Activated CD8-positive, alpha-beta memory T cell treated with anti-CD3 and anti-CD28 coated beads, Interleukin-2, amount 10 ng/mL, durations not matched to agents 7 days and 5 days (primary cell): ENCODE measurements at regions of chr12 and their contacts with region 1.

Region 1: DNA sequence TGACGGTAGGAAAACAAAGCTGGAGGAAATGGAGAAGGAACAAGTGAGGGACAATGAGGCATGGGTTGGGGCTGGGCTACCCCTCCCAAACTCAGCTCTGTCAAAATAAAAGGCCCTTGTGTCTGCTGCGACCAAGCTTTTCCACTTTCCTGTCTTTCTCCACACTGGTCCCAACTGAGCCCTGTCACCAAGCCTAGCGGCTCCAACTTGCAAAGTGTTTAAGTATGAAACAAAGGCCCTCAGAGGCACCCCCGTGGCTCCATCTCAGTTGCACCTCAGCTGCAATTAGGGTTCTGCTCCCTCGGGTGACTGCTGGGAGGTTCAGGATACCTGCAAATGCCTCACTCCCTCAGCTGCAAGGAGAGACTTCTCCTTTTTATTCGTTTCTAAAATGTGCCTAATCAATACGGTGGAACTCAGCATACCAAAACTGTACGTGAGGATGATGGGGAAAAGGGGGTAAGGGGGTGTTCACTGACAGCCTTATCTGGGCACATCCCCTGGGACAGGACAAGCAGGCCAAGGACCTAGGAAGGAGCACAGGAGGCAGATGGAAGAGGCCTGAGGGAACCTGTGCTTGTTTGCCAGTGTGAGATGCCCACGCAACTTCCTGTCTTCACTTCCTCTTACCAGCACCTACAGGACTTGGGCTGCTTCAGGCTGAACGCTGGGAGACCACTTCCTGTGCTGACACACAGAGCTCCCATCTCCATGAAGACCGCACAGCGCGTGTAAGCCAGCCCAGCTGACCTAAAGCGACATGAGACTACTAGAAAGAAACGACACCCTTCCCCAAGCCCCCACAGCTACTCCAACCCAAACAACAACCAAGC is 8.9 kb downstream of the VAMP1 start:
- DNase-seq: peak; percentile 97
- ATAC-seq: peak; percentile 82
- H3K4me3 Mint-ChIP-seq: peak overlapping the region; percentile 72
- H3K27ac Mint-ChIP-seq: peak overlapping the region; percentile 98
- H3K4me1 Mint-ChIP-seq: peaks cover 87% of the 10 kb centered on the region
- H3K27me3 Mint-ChIP-seq: no peaks in the 10 kb centered on the region

Region 2: GRCh38 chr12:6443361-6443983 is 18.1 kb before region 1 on chr12:
- CTCF ChIA-PET with region 1: interaction called, 45 read pairs
- DNase-seq: peak; percentile 67
- ATAC-seq: peak; percentile 50
- H3K4me3 Mint-ChIP-seq: peak overlapping the region; percentile 80
- H3K27ac Mint-ChIP-seq: peak overlapping the region; percentile 87
- H3K4me1 Mint-ChIP-seq: peaks cover 66% of the 10 kb centered on the region
- H3K27me3 Mint-ChIP-seq: no peaks in the 10 kb centered on the region

Region 3: DNA sequence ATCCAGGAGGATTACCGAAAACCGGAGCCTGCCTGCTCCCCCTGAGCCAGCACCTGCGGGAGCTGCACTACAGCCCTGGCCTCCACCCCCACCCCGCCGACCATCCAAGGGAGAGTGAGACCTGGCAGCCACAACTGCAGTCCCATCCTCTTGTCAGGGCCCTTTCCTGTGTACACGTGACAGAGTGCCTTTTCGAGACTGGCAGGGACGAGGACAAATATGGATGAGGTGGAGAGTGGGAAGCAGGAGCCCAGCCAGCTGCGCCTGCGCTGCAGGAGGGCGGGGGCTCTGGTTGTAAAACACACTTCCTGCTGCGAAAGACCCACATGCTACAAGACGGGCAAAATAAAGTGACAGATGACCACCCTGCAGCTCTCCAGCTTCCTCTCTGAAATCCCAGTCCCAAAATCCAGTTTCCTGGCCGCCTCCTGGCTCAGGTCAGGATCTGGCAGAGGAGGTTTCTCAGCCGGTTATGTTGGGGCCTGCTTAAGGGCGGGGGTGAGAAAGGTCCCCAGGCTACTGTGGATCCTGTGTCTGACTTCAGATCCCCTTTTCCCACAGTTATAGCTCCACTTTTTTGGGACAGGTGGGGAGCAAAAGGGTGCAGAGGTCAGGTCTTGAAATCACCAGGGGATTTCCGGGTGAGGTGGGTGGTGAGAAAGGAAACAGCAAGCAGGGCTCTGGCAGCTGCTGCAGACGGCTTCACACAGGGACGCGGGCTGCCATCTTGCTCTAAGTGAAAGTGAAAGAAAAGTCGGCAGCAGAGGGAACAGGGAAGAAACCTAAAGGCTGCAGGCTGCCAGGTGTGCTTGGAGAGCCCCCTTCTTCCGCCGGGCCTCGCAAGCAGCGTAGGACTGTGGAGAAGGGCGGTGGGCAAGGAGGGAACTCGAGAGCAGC is 10.0 kb before region 1 on chr12 and contains the start of gene TAPBPL:
- CTCF ChIA-PET with region 1: interaction called, 45 read pairs
- DNase-seq: peak; percentile 90
- ATAC-seq: peak; percentile 84
- H3K4me3 Mint-ChIP-seq: peak within 1 kb of the TSS; percentile 97
- H3K27ac Mint-ChIP-seq: peak within 1 kb of the TSS; percentile 94
- H3K4me1 Mint-ChIP-seq: peaks cover 59% of the 10 kb centered on the region
- H3K27me3 Mint-ChIP-seq: no peaks in the 10 kb centered on the region
- total RNA-seq, gene TAPBPL: 49.1 to 53.0 TPM

Region 4: GRCh38 chr12:6523708-6524107 is 62.1 kb after region 1 on chr12:
- CTCF ChIA-PET with region 1: no interaction called
- DNase-seq: no peak
- ATAC-seq: no peak
- H3K4me3 Mint-ChIP-seq: no peak overlapping the region
- H3K27ac Mint-ChIP-seq: peak overlapping the region; percentile 16
- H3K4me1 Mint-ChIP-seq: peaks cover 3% of the 10 kb centered on the region
- H3K27me3 Mint-ChIP-seq: no peaks in the 10 kb centered on the region

Region 5: GRCh38 chr12:6533923-6534694 is 72.5 kb after region 1 on chr12 and contains the start of gene GAPDH:
- CTCF ChIA-PET with region 1: interaction called, 15 read pairs
- DNase-seq: peak; percentile 94
- ATAC-seq: peak; percentile 53
- H3K4me3 Mint-ChIP-seq: peak within 1 kb of the TSS; percentile 92
- H3K27ac Mint-ChIP-seq: peak within 1 kb of the TSS; percentile 99
- H3K4me1 Mint-ChIP-seq: peaks cover 54% of the 10 kb centered on the region
- H3K27me3 Mint-ChIP-seq: no peaks in the 10 kb centered on the region
- total RNA-seq, gene GAPDH: 5,133 to 5,396 TPM